ENCODE measurements at regions of chr9 and their contacts with region 1.

Region 1: DNA sequence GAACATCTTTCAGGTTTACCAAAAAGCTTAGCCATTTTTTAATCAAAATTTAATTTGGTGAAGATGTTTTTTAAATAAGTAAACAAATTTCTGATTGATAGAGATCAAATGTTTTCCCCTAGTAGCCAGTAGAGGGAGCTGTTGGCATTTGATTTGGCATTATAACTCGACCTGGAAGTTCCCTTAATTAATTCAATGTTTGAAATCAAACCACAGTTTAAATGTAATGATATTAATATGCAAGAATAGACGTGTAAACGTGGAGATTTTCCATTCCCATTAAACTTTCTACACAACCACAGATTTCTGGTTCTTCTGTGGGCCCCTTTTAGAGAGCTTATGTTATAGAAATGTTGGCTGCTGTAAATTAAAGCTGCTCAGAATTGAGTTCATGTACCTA is 148.1 kb upstream of the MPDZ start:
- DNase-seq: no peak
- ATAC-seq: no peak
- H3K4me3 Mint-ChIP-seq: no peak overlapping the region
- H3K27ac Mint-ChIP-seq: no peak overlapping the region
- H3K4me1 Mint-ChIP-seq: no peaks in the 10 kb centered on the region
- H3K27me3 Mint-ChIP-seq: no peaks in the 10 kb centered on the region
- CTCF ChIP-seq: peak; percentile 72

Region 2: GRCh38 chr9:13369431-13369830 is 58.2 kb before region 1 on chr9:
- CTCF ChIA-PET with region 1: no interaction called
- POLR2A ChIA-PET with region 1: no interaction called
- intact Hi-C with region 1: no loop called
- DNase-seq: no peak
- ATAC-seq: no peak
- H3K4me3 Mint-ChIP-seq: no peak overlapping the region
- H3K27ac Mint-ChIP-seq: no peak overlapping the region
- H3K4me1 Mint-ChIP-seq: no peaks in the 10 kb centered on the region
- H3K27me3 Mint-ChIP-seq: no peaks in the 10 kb centered on the region
- CTCF ChIP-seq: no peak

Region 3: GRCh38 chr9:13446938-13447842 is 19.6 kb after region 1 on chr9:
- CTCF ChIA-PET with region 1: no interaction called
- POLR2A ChIA-PET with region 1: no interaction called
- intact Hi-C with region 1: no loop called
- DNase-seq: no peak
- ATAC-seq: no peak
- H3K4me3 Mint-ChIP-seq: no peak overlapping the region
- H3K27ac Mint-ChIP-seq: no peak overlapping the region
- H3K4me1 Mint-ChIP-seq: no peaks in the 10 kb centered on the region
- H3K27me3 Mint-ChIP-seq: no peaks in the 10 kb centered on the region
- CTCF ChIP-seq: no peak

Region 4: GRCh38 chr9:14353222-14354056 is 925.9 kb after region 1 on chr9:
- CTCF ChIA-PET with region 1: interaction called, 27 read pairs
- POLR2A ChIA-PET with region 1: no interaction called
- intact Hi-C with region 1: loop called (anchors 5 kb)
- DNase-seq: peak; percentile 88
- ATAC-seq: peak; percentile 70
- H3K4me3 Mint-ChIP-seq: no peak overlapping the region
- H3K27ac Mint-ChIP-seq: no peak overlapping the region
- H3K4me1 Mint-ChIP-seq: no peaks in the 10 kb centered on the region
- H3K27me3 Mint-ChIP-seq: peaks cover 54% of the 10 kb centered on the region
- CTCF ChIP-seq: peak; percentile 69

Region 5: DNA sequence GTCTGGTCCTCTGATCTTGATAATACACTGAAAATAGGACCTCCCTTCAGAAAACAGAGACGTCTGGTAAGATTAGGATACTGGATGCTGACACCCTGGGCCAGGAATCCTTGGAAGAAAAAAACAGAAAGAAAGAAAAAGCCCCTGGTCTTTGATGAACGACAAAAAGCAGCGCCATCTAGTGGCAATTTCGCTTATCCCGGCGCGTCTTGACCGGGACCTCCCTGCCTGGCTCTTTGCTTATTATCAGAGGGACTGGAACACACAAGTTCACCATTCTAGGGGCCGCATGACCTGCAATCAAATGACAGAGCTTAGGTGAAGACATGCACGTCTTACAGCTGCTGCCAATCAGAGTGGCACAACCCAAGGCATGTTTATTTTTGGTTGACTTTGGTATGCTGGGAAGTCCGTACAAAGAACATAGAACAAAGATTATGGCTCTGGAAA is 1001.2 kb after region 1 on chr9:
- CTCF ChIA-PET with region 1: interaction called, 4 read pairs
- POLR2A ChIA-PET with region 1: no interaction called
- intact Hi-C with region 1: loop called (anchors 10 kb)
- DNase-seq: peak; percentile 60
- ATAC-seq: no peak
- H3K4me3 Mint-ChIP-seq: no peak overlapping the region
- H3K27ac Mint-ChIP-seq: no peak overlapping the region
- H3K4me1 Mint-ChIP-seq: no peaks in the 10 kb centered on the region
- H3K27me3 Mint-ChIP-seq: peaks cover 13% of the 10 kb centered on the region
- CTCF ChIP-seq: peak; percentile 64